Activated naive CD4-positive, alpha-beta T cell treated with anti-CD3 and anti-CD28 coated beads for 36 hours (primary cell): ENCODE measurements at regions of chr1 and their contacts with region 1.

Region 1: GRCh38 chr1:203486618-203487370 is 7.2 kb upstream of the OPTC start:
- DNase-seq: no peak
- H3K4me3 Mint-ChIP-seq: peak overlapping the region; percentile 67
- H3K27ac Mint-ChIP-seq: no peak overlapping the region
- H3K4me1 Mint-ChIP-seq: peaks cover 6% of the 10 kb centered on the region
- H3K27me3 Mint-ChIP-seq: no peaks in the 10 kb centered on the region

Region 2: GRCh38 chr1:203273206-203273868 is 213.5 kb before region 1 on chr1:
- CTCF ChIA-PET with region 1: interaction called, 82 read pairs
- intact Hi-C with region 1: loop called (anchors 1 kb)
- DNase-seq: peak; percentile 96
- H3K4me3 Mint-ChIP-seq: peak overlapping the region; percentile 72
- H3K27ac Mint-ChIP-seq: peak overlapping the region; percentile 83
- H3K4me1 Mint-ChIP-seq: peaks cover 58% of the 10 kb centered on the region
- H3K27me3 Mint-ChIP-seq: no peaks in the 10 kb centered on the region

Region 3: DNA sequence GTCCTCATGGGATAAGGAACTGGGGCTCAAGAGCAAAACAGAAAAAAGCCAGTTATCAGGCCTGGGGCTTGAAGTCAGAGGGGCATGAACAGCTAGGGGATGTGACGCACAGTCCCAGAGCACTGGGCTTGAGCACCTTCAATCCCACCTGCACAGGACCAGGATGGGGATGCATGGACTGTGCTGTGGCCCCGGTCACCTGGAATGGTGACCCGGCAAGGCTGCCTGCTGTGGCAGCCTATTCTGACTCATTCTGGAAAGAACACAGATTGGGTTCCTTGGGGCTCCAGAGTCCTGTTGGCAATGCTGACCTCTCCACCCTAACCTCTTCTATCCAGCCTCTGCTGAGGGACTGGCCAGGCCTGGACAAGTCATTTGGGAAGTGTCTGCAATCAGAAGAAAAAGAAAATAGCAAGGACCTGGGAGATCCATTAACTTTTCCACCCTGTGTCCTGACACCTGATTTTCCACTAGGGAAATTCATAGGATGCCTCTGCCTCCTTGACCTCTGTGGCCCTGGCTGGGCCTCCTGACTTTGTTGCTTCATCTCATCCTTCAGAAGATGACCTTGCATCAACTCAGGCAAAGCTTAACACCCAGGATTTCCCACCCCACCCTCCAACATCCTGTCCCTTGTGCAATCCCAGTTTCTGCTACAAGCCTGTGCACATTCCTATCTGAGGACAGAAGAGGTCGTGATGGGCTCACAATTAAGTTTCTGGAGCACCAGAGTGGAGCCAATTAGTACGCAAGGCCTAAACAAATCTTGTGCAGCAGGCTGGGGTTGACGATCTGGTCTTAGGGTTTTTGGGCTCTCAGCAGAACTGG is 118.0 kb before region 1 on chr1:
- CTCF ChIA-PET with region 1: no interaction called
- intact Hi-C with region 1: no loop called
- DNase-seq: no peak
- H3K4me3 Mint-ChIP-seq: no peak overlapping the region
- H3K27ac Mint-ChIP-seq: no peak overlapping the region
- H3K4me1 Mint-ChIP-seq: no peaks in the 10 kb centered on the region
- H3K27me3 Mint-ChIP-seq: peaks cover 5% of the 10 kb centered on the region